Prostate gland (tissue), 2 donors: ENCODE measurements at regions of chrX and their contacts with region 1.

Region 1: DNA sequence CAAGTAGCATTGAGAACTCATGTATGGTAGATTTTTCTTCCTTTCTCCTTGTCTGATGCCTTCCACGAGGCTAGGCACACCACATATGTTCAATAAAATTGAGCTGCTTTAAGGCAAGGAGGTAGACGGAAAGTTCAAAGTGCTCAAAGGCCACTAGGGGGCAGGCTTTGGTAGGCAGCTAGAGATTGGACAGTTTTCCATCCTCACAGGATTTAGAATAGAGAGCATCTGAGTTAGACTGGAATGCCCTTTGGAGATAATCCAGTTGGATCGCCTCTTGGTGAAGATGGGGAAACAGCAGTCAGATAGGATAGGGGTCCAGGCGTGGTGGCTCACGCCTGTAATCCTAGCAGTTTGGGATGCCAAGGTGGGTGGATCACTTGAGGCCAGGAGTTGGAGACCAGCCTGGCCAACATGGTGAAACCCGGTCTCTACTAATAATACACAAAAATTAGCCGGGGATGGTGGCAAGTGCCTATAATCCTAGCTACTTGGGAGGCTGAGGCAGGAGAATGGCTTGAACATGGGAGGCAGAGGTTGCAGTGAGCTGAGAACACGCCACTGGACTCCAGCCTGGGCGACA is 30.4 kb downstream of the ELF4 start:
- DNase-seq: peak; percentile 51
- H3K4me3 ChIP-seq: no peak overlapping the region
- H3K27ac ChIP-seq: no peak overlapping the region
- H3K4me1 ChIP-seq: no peaks in the 10 kb centered on the region
- H3K27me3 ChIP-seq: no peaks in the 10 kb centered on the region
- CTCF ChIP-seq: peak in 3 of 4 experiments; percentile 63 to 68 (median 67)
- POLR2A ChIP-seq: no peak

Region 2: GRCh38 chrX:130009658-130010223 is 70.2 kb before region 1 on chrX:
- intact Hi-C with region 1: no loop called
- DNase-seq: no peak
- H3K4me3 ChIP-seq: no peak overlapping the region
- H3K27ac ChIP-seq: no peak overlapping the region
- H3K4me1 ChIP-seq: no peaks in the 10 kb centered on the region
- H3K27me3 ChIP-seq: no peaks in the 10 kb centered on the region
- CTCF ChIP-seq: no peak
- POLR2A ChIP-seq: no peak

Region 3: DNA sequence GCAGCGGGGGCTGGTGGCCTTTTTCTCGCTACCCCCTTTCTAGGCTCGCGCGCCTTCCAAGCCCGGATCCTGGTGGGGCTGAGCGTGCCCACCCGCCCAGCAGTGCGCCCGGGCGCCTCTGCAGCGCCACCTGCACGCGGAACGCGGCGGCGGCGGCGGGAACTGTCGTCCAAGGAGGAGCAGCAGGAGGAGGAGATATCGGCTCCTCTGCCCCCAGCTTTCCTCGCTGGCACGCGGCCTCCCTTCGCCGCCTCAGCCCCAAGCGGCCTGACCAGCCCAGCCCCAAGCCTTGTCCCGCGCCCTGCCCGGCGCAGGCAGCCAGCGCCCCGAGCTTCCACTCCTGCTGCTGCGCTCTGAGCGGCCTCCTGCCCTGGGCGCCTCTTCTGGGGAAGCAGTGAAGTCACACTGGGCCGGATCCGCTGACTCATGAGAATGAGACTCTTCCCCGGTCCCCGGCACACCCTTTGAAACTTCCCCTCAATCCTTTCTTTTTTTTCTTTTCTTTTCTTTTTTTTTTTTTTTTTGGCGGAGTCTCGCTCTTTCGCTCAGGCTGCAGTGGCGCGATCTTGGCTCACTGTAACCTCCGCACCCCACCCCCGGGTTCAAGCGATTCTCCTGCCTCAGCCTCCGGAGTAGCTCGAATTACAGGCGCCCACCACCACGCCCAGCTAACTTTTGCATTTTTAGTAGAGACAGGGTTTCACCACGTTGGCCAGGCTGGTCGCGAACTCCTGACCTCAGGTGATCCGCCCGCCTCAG is 41.0 kb after region 1 on chrX:
- intact Hi-C with region 1: loop called (anchors 5 kb)
- DNase-seq: peak; percentile 59
- H3K4me3 ChIP-seq: peak overlapping the region; percentile 6 to 16
- H3K27ac ChIP-seq: peak overlapping the region; percentile 46 to 67
- H3K4me1 ChIP-seq: no peaks in the 10 kb centered on the region
- H3K27me3 ChIP-seq: no peaks in the 10 kb centered on the region
- CTCF ChIP-seq: peak; percentile 10 to 76 (median 53)
- POLR2A ChIP-seq: peak; percentile 36

Region 4: GRCh38 chrX:130190801-130191200 is 110.9 kb after region 1 on chrX:
- intact Hi-C with region 1: loop called (anchors 5 kb)
- DNase-seq: no peak
- H3K4me3 ChIP-seq: no peak overlapping the region
- H3K27ac ChIP-seq: no peak overlapping the region
- H3K4me1 ChIP-seq: no peaks in the 10 kb centered on the region
- H3K27me3 ChIP-seq: no peaks in the 10 kb centered on the region
- CTCF ChIP-seq: no peak
- POLR2A ChIP-seq: no peak

Region 5: DNA sequence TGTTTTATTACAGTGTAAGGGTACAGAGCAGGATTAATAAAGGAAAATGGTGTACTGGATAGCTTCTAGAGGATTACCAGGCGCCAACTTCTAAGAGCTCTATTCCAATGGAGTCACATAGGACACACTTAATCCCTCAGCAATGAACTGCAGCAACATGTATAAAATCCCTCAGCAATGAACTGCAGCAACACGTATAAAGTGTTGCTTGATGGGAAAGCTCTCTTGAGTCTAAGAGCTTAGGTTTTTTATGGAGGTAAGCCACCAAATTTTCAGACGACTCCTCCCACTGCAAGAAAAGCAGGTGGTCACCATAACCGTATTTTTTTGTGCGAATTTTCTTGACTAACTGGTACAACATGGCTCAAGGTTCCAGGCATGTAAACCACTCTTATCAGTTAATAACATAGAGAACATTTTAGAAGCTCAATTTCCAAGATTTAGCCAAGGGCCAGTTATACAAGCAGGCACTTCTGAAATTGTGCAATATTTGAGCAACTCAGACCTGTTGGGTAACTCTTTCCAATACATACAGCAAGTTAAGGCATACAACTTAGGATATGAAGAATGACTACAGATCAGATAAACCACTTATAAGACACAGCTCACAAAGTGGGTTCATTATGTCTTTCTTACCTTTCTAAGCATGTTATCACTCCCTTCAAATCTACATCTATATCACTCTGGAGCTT is 144.7 kb after region 1 on chrX:
- intact Hi-C with region 1: no loop called
- DNase-seq: no peak
- H3K4me3 ChIP-seq: no peak overlapping the region
- H3K27ac ChIP-seq: no peak overlapping the region
- H3K4me1 ChIP-seq: no peaks in the 10 kb centered on the region
- H3K27me3 ChIP-seq: no peaks in the 10 kb centered on the region
- CTCF ChIP-seq: no peak
- POLR2A ChIP-seq: no peak

Region 6: GRCh38 chrX:130468395-130468923 is 388.5 kb after region 1 on chrX:
- intact Hi-C with region 1: no loop called
- DNase-seq: no peak
- H3K4me3 ChIP-seq: no peak overlapping the region
- H3K27ac ChIP-seq: no peak overlapping the region
- H3K4me1 ChIP-seq: no peaks in the 10 kb centered on the region
- H3K27me3 ChIP-seq: no peaks in the 10 kb centered on the region
- CTCF ChIP-seq: no peak
- POLR2A ChIP-seq: no peak